Calu3 (cell line): ENCODE measurements at regions of chr7 and their contacts with region 1.

Region 1: DNA sequence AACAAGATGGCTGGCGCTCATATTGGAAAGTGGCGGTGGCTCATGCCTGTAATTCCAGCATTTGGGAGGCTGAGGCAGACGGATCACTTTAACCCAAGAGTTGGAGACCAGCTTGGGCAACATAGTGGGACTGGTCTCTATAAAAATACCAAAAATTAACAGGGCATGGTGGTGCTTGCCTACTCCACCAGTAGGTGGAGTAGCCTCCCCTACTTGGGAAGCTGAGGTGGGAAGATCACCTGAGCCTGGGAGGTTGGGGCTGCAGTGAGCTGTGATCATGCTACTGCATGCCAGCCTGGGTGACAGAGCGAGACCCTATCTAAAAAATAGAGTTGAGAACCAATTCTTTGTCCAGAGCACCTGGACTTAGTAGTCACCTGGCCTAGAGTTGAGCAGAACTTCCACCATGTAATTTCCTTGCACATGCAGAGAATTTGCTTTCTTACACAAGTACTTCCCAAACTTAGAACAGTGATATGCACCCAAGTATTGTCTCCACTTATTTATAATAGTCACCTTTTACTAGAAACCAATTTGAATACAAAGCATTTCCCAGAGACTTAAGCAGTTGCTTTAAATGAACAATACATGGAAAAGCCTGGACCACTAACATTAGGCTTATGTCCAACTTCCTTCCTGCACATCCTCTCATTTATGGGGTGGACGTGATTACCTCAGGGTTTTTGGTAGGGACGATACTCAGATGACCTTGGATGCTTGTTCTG is 15.9 kb downstream of the LAMB4 start:
- DNase-seq: peak; percentile 19
- H3K4me3 Mint-ChIP-seq: no peak overlapping the region
- H3K27ac Mint-ChIP-seq: no peak overlapping the region
- H3K4me1 Mint-ChIP-seq: no peaks in the 10 kb centered on the region
- H3K27me3 Mint-ChIP-seq: no peaks in the 10 kb centered on the region
- CTCF ChIP-seq: peak; percentile 58

Region 2: DNA sequence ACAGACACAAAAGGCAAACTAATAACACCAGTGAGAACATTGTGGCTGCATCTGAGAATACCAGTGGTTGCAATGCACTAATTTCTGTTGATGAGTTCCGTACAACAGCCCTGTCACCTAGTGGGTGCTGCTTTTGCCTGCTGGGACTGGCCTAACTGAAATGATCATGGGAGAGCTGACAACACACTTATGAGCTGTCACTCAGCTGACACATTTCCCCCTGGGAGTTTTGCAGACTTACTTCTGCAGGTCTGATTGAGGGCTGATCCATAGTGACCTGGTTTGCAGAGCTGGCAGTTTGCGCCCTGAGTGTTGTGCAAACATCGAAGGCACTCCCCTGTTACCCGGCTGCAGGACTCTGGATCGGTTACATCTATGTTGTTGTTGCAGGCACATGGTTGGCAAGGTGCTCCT is 50.8 kb before region 1 on chr7:
- CTCF ChIA-PET with region 1: no interaction called
- intact Hi-C with region 1: no loop called
- DNase-seq: no peak
- H3K4me3 Mint-ChIP-seq: no peak overlapping the region
- H3K27ac Mint-ChIP-seq: no peak overlapping the region
- H3K4me1 Mint-ChIP-seq: no peaks in the 10 kb centered on the region
- H3K27me3 Mint-ChIP-seq: no peaks in the 10 kb centered on the region
- CTCF ChIP-seq: no peak

Region 3: GRCh38 chr7:108235451-108236061 is 121.3 kb after region 1 on chr7:
- CTCF ChIA-PET with region 1: no interaction called
- intact Hi-C with region 1: no loop called
- DNase-seq: no peak
- H3K4me3 Mint-ChIP-seq: peak overlapping the region; percentile 32
- H3K27ac Mint-ChIP-seq: peak overlapping the region; percentile 33
- H3K4me1 Mint-ChIP-seq: peaks cover 28% of the 10 kb centered on the region
- H3K27me3 Mint-ChIP-seq: no peaks in the 10 kb centered on the region
- CTCF ChIP-seq: no peak

Region 4: DNA sequence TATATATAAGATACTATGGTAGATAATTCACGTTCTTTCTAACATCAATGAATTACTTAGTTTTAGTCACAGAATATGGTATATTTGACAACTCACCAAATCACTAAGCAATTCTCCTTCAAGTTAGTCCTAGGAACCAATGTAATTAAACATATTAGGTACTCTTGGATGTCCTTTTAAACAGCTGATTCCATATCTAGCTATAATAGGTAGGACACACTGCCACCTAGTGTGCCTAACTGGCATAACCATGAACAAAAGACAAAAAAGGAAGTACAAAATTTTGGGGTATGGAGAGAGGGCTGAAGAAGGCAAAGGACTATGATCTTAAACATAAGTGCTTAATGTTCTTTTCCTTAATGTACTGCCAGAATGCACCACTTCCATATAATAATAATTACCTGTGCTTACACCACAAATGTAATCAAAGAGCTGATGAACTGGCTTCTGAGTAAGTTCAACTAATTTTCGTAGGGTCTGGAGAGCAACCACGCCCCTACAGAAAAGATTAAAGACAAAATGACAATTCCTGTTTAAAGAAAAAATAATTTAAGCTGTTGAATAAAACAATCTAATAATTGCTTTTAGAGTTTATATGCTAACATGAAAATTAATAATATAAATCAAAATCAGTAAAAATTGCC is 382.9 kb after region 1 on chr7:
- CTCF ChIA-PET with region 1: interaction called, 8 read pairs
- intact Hi-C with region 1: loop called (anchors 1 kb)
- DNase-seq: peak; percentile 38
- H3K4me3 Mint-ChIP-seq: no peak overlapping the region
- H3K27ac Mint-ChIP-seq: no peak overlapping the region
- H3K4me1 Mint-ChIP-seq: no peaks in the 10 kb centered on the region
- H3K27me3 Mint-ChIP-seq: no peaks in the 10 kb centered on the region
- CTCF ChIP-seq: peak; percentile 50